MCF 10A (cell line): ENCODE measurements at regions of chr1 and their contacts with region 1.

Region 1: DNA sequence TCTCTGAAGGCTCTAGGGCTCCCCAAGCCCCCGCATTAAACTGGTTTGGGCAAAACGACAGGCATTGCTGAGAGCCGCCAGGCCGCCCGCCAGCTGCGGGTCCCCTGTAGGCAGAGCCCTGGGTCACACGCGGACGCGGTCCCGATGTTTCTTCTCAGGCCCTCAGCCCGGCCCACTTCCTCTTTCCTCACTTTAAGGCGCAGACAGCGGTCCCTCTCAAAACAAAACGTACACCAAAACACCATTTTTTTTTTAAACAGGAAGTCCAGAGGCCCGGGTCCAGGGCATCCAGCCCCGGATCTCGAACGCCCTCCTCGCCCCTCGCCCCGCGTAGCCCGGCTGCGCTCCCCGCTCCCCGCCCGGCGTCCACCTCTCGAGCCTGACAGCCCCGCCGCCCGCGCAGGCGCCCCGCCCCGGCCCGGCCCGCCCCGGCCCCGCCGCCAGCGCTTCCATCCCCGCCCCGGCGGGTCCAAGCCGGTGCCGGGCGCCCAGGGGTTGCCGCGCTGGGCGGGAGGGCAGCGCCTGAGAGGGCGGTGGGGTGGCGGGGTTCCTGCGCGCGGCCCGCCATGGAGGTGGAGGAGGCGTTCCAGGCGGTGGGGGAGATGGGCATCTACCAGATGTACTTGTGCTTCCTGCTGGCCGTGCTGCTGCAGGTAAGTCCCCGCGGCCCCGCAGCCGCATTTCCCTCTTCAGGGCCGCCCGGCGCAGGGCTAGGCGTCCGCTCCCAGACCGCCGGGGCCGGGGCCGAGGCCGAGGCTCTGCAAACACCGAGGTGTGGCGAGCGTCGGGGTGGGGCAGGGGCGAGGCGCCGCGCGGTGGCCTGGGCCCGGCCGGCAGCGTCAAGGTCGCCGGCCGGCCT is at the start of gene SLC22A15:
- DNase-seq: peak; percentile 54
- H3K4me3 Mint-ChIP-seq: peak within 1 kb of the TSS; percentile 86
- H3K27ac Mint-ChIP-seq: peak within 1 kb of the TSS; percentile 82
- H3K4me1 Mint-ChIP-seq: peaks cover 20% of the 10 kb centered on the region
- H3K27me3 Mint-ChIP-seq: no peaks in the 10 kb centered on the region
- CTCF ChIP-seq: no peak
- total RNA-seq, gene SLC22A15: 32.4 and 33.5 TPM in 2 replicates

Region 2: DNA sequence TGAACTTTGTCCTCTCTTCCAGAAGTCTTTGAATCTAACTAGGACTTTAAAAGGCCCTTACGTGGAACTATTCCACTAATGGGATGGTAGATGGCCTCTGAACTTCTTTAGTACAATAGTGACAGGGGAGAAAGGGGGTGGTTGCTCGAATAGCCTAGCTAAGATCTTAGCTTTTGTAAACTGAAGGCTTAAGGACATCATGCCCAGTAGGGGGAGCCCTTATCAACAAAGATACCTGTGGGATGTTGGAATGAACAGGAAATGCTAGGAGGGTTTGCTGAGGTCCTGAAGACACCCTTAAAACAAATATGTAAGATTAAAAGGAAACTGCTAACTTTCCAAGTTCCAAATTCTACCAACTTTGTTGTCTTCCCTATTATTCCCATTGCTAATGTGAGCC is 168.6 kb before region 1 on chr1:
- CTCF ChIA-PET with region 1: interaction called, 39 read pairs
- POLR2A ChIA-PET with region 1: interaction called, 20 read pairs
- intact Hi-C with region 1: loop called (anchors 1 kb)
- DNase-seq: peak; percentile 82
- H3K4me3 Mint-ChIP-seq: no peak overlapping the region
- H3K27ac Mint-ChIP-seq: no peak overlapping the region
- H3K4me1 Mint-ChIP-seq: peaks cover 13% of the 10 kb centered on the region
- H3K27me3 Mint-ChIP-seq: no peaks in the 10 kb centered on the region
- CTCF ChIP-seq: peak; percentile 62

Region 3: GRCh38 chr1:115829023-115829693 is 147.1 kb before region 1 on chr1:
- CTCF ChIA-PET with region 1: interaction called, 3 read pairs
- POLR2A ChIA-PET with region 1: no interaction called
- intact Hi-C with region 1: loop called (anchors 5 kb)
- DNase-seq: peak; percentile 90
- H3K4me3 Mint-ChIP-seq: no peak overlapping the region
- H3K27ac Mint-ChIP-seq: no peak overlapping the region
- H3K4me1 Mint-ChIP-seq: peaks cover 9% of the 10 kb centered on the region
- H3K27me3 Mint-ChIP-seq: no peaks in the 10 kb centered on the region
- CTCF ChIP-seq: no peak

Region 4: DNA sequence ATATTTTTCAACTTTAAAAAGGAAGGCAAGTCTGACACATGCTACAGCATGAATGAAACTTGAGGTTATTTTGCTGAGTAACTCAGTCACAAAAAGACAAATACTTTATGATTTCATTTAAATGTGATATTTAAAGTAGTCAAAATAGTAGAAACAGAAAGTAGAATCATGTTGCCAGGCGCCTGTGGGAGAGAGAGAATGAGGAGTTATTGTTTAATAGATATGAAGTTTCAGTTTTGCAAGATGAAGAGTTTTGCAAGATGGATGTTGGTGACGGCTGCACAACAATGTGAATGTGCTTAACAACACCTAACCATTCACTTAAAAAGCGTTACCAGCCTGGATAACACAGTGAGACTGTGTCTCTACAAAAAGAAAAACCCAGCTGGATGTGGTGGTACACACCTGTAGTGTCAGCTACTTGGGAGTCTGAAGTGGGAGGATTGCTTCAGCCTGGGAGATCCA is 376.1 kb after region 1 on chr1:
- CTCF ChIA-PET with region 1: no interaction called
- POLR2A ChIA-PET with region 1: no interaction called
- intact Hi-C with region 1: no loop called
- DNase-seq: no peak
- H3K4me3 Mint-ChIP-seq: no peak overlapping the region
- H3K27ac Mint-ChIP-seq: no peak overlapping the region
- H3K4me1 Mint-ChIP-seq: peaks cover 15% of the 10 kb centered on the region
- H3K27me3 Mint-ChIP-seq: no peaks in the 10 kb centered on the region
- CTCF ChIP-seq: no peak